Caco-2 (cell line): ENCODE measurements at regions of chr17 and their contacts with region 1.

Region 1: DNA sequence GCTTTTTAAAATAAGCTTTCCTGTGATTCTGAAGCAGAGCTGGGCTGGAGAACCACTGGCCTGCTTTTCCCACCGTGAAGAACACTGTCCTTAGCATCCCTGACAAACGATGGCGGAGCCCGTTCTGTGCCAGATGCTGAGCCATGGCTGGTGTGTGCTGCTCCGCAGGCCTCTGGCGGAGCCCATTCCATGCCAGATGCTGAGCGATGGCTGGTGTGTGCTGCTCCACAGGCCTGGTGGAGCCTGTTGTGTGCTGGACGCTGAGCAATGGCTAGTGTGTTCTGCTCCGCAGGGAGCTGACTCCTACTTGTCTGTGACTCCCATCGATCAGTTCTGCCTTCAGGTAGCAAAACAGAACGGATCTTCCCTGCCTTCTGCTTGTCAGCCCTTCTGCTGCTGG is 4.3 kb downstream of the ENDOV start:
- DNase-seq: no peak
- H3K4me3 ChIP-seq: no peak overlapping the region
- H3K4me3 Mint-ChIP-seq: no peak overlapping the region
- H3K27ac Mint-ChIP-seq: no peak overlapping the region
- H3K4me1 ChIP-seq: peaks cover 2% of the 10 kb centered on the region; the same call in 1 of the 2 replicates
- H3K4me1 Mint-ChIP-seq: peaks cover 2% of the 10 kb centered on the region
- H3K27me3 ChIP-seq: no peaks in the 10 kb centered on the region
- H3K27me3 Mint-ChIP-seq: peaks cover under 1% of the 10 kb centered on the region
- CTCF ChIP-seq: no peak

Region 2: GRCh38 chr17:80568246-80568645 is 149.0 kb after region 1 on chr17:
- CTCF ChIA-PET with region 1: no interaction called
- POLR2A ChIA-PET with region 1: interaction called, 10 read pairs
- intact Hi-C with region 1: no loop called
- DNase-seq: no peak
- H3K4me3 ChIP-seq: no peak overlapping the region
- H3K4me3 Mint-ChIP-seq: no peak overlapping the region
- H3K27ac Mint-ChIP-seq: no peak overlapping the region
- H3K4me1 ChIP-seq: no peaks in the 10 kb centered on the region
- H3K4me1 Mint-ChIP-seq: peaks cover 17% of the 10 kb centered on the region
- H3K27me3 ChIP-seq: no peaks in the 10 kb centered on the region
- H3K27me3 Mint-ChIP-seq: no peaks in the 10 kb centered on the region
- CTCF ChIP-seq: no peak

Region 3: GRCh38 chr17:80632046-80632581 is 212.9 kb after region 1 on chr17:
- CTCF ChIA-PET with region 1: no interaction called
- POLR2A ChIA-PET with region 1: interaction called, 14 read pairs
- intact Hi-C with region 1: no loop called
- DNase-seq: peak; percentile 57 to 59
- H3K4me3 ChIP-seq: no peak overlapping the region
- H3K4me3 Mint-ChIP-seq: peak overlapping the region; percentile 46
- H3K27ac Mint-ChIP-seq: peak overlapping the region; percentile 72
- H3K4me1 ChIP-seq: peaks cover 21% of the 10 kb centered on the region
- H3K4me1 Mint-ChIP-seq: peaks cover 16% of the 10 kb centered on the region
- H3K27me3 ChIP-seq: no peaks in the 10 kb centered on the region
- H3K27me3 Mint-ChIP-seq: no peaks in the 10 kb centered on the region
- CTCF ChIP-seq: no peak